Ascending aorta (tissue), 2 donors: ENCODE measurements at regions of chr6 and their contacts with region 1.

Region 1: DNA sequence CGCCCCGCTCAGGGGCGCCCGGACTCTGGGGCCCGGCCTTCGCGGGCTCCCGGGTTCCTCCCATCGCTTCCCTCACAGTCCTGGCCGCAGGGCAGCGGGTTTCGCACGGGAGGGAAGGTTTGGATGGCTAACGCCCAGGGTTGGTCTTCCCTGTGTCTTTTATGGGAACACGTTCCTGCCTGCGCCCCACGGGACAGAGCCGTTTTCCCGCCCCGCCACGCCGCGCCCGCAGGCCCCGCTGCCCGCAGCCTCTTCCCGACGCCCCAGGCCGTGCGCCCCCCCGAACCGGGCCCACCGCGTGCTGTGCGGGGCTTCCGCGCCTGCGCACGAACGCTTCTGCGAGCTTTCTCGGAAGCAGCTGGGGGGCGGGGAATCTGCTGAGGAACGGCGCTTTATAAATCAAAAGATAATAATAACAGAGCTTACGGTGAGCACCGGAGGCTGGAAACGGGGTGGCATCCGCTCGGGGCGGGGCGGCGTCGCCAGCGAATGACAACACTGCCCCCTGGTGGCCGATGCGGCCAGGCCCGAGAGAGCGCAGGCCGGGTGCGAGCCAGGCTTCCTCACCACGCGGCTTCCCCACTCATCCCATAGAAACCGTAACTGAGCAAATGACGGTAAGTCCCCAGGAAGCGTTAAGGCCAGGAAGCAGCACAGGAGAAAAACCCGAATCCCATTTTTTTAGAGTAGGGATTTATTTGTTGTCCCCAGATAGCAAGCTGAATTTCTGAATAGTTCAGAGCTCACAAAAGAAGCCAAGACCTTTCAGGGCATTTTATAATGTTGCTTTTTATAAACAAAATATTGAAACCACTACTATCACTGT is 116.4 kb downstream of the MYLK4 start:
- DNase-seq: peak; percentile 57 to 94
- H3K4me3 ChIP-seq: peak overlapping the region; percentile 46 to 58
- H3K27ac ChIP-seq: peak overlapping the region; percentile 95 to 96
- H3K4me1 ChIP-seq: peaks cover 0 to 42% of the 10 kb centered on the region in 2 donors
- H3K27me3 ChIP-seq: no peaks in the 10 kb centered on the region
- CTCF ChIP-seq: peak; percentile 98 to 99 (median 99)

Region 2: DNA sequence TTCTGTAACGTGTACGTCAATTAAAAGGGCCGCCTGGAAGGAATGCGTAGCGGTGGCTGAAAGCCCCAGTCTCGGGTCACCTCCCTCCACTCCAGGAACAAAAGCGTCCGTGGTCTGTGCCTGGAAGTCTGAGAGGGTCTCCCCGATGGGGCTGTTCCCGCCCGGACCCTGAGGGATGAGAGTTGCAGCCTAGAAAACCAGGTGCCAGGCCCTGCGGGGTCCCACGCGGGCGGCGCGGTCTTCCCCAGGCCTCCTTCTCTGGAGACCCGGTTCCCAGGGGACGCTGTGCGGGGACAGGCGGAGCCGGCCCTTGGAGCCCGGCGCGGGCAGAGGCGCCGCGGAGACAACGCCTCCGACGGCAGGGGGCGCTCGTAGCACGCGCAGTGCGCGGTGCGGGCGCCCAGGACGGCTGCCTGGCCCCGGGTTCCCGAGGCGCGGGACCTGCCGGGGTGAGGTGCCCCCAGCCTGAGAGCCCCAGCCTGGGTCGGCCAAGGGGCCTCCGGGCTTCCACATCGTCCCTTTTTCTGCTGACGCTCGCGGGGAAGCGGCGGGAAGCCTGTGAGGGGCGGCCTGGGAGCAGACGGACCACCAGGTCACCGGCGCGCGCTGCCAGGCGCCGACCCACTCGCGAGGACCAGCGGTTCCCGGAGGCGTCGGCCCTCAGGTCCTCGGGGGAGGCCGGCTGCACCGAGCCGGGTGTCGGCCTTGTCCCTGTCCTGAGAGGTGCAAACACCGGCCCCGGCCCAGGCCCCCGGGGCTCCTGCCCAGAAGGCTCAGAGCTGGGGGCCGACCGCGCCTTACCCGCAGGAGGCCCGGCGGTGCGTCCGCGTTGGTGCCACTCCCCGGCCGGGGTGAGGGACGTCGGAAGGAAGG is 1030.0 kb before region 1 on chr6:
- intact Hi-C with region 1: loop called (anchors 1 kb)
- DNase-seq: peak in 1 of 2 donors; percentile 87
- H3K4me3 ChIP-seq: peak overlapping the region; percentile 79 to 94
- H3K27ac ChIP-seq: peak overlapping the region; percentile 97 to 99
- H3K4me1 ChIP-seq: peaks cover 0 to 10% of the 10 kb centered on the region in 2 donors
- H3K27me3 ChIP-seq: no peaks in the 10 kb centered on the region
- CTCF ChIP-seq: peak; percentile 85 to 99 (median 91)

Region 3: DNA sequence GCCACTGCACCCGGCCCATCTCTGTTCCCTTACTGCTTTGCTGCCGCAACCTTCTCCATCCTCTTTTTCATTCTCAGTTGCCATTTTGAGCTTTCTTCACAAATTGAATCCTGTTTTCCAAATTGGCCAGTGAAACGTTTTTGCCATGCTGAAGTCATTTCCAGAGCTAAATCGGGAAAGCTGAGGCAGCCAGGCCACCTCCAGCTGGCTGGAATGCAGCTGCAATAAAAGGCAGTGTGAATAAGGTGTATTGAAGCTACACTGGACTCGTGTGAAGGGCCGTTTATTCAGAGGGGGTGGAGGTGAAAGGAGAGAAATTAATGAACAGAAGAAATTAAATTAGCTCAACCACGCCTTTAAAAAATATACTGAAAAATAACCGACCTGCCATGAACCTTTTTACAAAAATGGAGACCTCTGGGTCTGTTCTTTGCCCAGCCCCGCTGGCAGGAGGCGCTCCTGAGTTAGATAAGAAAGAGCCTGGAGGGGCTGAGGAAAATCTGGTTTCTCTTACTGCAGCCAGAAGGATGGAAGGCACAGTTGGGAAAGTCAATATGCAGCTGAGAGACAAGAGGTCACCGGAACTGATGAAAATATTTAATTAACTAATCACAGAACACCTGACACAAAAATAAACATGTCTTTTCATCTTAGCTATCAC is 740.8 kb before region 1 on chr6:
- intact Hi-C with region 1: loop called (anchors 5 kb)
- DNase-seq: peak in 1 of 2 donors; percentile 79
- H3K4me3 ChIP-seq: no peak overlapping the region
- H3K27ac ChIP-seq: peak overlapping the region; percentile 83 to 95
- H3K4me1 ChIP-seq: peaks cover 0 to 24% of the 10 kb centered on the region in 2 donors
- H3K27me3 ChIP-seq: no peaks in the 10 kb centered on the region
- CTCF ChIP-seq: peak; percentile 17 to 53 (median 29)

Region 4: GRCh38 chr6:2245094-2245876 is 389.1 kb before region 1 on chr6 and contains the start of gene GMDS:
- intact Hi-C with region 1: loop called (anchors 2 kb)
- DNase-seq: peak; percentile 56 to 93
- H3K4me3 ChIP-seq: peak within 1 kb of the TSS; percentile 86 to 95
- H3K27ac ChIP-seq: peak within 1 kb of the TSS; percentile 87 to 94
- H3K4me1 ChIP-seq: peaks cover 0 to 7% of the 10 kb centered on the region in 2 donors
- H3K27me3 ChIP-seq: no peaks in the 10 kb centered on the region
- CTCF ChIP-seq: no peak
- total RNA-seq, gene GMDS: 19.9 TPM

Region 5: GRCh38 chr6:2563635-2564034 is 70.7 kb before region 1 on chr6:
- intact Hi-C with region 1: loop called (anchors 5 kb)
- DNase-seq: no peak
- H3K4me3 ChIP-seq: peak overlapping the region in 1 of 2 donors; percentile 50
- H3K27ac ChIP-seq: peak overlapping the region; percentile 46 to 66
- H3K4me1 ChIP-seq: peaks cover 0 to 12% of the 10 kb centered on the region in 2 donors
- H3K27me3 ChIP-seq: no peaks in the 10 kb centered on the region
- CTCF ChIP-seq: no peak

Region 6: GRCh38 chr6:2841264-2842138 is 207.1 kb after region 1 on chr6 and contains the start of gene SERPINB1:
- intact Hi-C with region 1: loop called (anchors 10 kb)
- DNase-seq: peak; percentile 75 to 97
- H3K4me3 ChIP-seq: peak within 1 kb of the TSS; percentile 74 to 87
- H3K27ac ChIP-seq: peak within 1 kb of the TSS; percentile 97 to 99
- H3K4me1 ChIP-seq: peaks cover 10 to 16% of the 10 kb centered on the region in 2 donors
- H3K27me3 ChIP-seq: no peaks in the 10 kb centered on the region
- CTCF ChIP-seq: peak in 1 of 3 experiments; percentile 20
- total RNA-seq, gene SERPINB1: 14.0 TPM